ENCODE measurements at regions of chr7 and their contacts with region 1.

Region 1: GRCh38 chr7:7686811-7687508 is 31.4 kb downstream of the RPA3 start:
- DNase-seq: no peak
- H3K4me3 ChIP-seq: no peak overlapping the region
- CTCF ChIP-seq: no peak

Region 2: GRCh38 chr7:7761340-7761980 is 74.5 kb after region 1 on chr7:
- CTCF ChIA-PET with region 1: interaction called, 144 read pairs
- POLR2A ChIA-PET with region 1: no interaction called
- DNase-seq: no peak
- H3K4me3 ChIP-seq: peak overlapping the region; percentile 53
- CTCF ChIP-seq: no peak

Measured in AG04449 (cell line).